Activated CD4-positive, alpha-beta T cell treated with anti-CD3 and anti-CD28 coated beads for 36 hours (primary cell): ENCODE measurements at regions of chr7 and their contacts with region 1.

Region 1: GRCh38 chr7:96596120-96596826 is 113.4 kb downstream of the SEM1 start:
- DNase-seq: no peak
- ATAC-seq: no peak
- H3K4me3 Mint-ChIP-seq: no peak overlapping the region
- H3K27ac Mint-ChIP-seq: no peak overlapping the region
- H3K4me1 Mint-ChIP-seq: no peaks in the 10 kb centered on the region
- H3K27me3 Mint-ChIP-seq: peaks cover 13% of the 10 kb centered on the region

Region 2: DNA sequence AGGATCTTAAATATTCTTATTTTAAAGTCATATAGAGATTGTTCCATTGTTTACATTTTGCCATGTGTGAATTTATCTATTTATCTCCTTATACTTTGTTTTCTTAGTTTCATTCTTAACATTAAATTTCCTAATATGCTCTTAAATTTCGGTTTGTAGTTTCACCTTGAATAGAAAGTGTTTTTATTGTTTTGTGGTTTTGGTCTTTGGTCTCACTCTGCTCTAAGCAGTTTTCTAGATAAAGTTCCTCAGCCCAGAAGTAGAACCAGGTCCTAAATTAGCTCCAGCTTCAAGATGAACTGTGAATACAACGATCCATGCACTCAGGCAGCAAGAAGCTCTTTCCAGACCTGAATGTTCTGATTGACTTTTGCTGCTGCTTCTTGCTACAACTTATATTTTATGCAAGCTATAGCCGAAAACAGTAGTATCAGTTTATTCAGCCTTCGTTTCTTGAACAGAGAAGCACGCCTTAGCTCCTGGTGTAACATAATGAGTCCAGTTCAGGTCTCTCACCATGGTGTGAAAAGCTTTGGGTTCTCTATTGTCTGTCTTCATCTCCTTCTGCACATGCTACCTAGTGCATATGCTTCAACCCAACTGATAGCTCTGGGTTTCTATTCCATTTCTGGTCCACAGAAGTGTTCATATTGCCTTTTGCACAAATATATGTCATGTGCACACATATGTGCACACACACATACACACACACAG is 18.0 kb after region 1 on chr7:
- CTCF ChIA-PET with region 1: interaction called, 4 read pairs
- POLR2A ChIA-PET with region 1: interaction called, 11 read pairs
- intact Hi-C with region 1: no loop called
- DNase-seq: no peak
- ATAC-seq: no peak
- H3K4me3 Mint-ChIP-seq: no peak overlapping the region
- H3K27ac Mint-ChIP-seq: no peak overlapping the region
- H3K4me1 Mint-ChIP-seq: no peaks in the 10 kb centered on the region
- H3K27me3 Mint-ChIP-seq: peaks cover 2% of the 10 kb centered on the region

Region 3: GRCh38 chr7:96679886-96680285 is 83.6 kb after region 1 on chr7:
- CTCF ChIA-PET with region 1: no interaction called
- POLR2A ChIA-PET with region 1: no interaction called
- intact Hi-C with region 1: no loop called
- DNase-seq: no peak
- ATAC-seq: peak; percentile 60
- H3K4me3 Mint-ChIP-seq: no peak overlapping the region
- H3K27ac Mint-ChIP-seq: no peak overlapping the region
- H3K4me1 Mint-ChIP-seq: peaks cover 4% of the 10 kb centered on the region
- H3K27me3 Mint-ChIP-seq: no peaks in the 10 kb centered on the region

Region 4: DNA sequence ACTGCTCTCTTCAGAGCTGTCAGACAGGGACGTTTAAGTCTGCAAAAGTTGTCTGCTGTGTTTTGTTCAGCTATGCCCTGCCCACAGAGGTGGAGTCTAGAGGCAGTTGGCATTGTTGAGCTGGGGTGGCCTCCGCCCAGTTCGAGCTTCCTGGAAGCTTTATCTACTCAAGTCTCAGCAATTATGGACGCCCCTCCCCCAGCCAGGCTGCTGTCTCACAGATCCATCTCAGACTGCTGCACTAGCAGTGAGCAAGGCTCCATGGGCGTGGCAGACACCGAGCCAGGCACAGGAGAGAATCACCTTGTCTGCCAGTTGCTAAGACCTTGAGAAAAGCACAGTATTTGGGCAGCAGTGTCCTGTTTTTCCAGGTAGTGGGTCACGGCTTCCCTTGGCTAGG is 619.3 kb after region 1 on chr7:
- CTCF ChIA-PET with region 1: no interaction called
- POLR2A ChIA-PET with region 1: no interaction called
- intact Hi-C with region 1: no loop called
- DNase-seq: no peak
- ATAC-seq: no peak
- H3K4me3 Mint-ChIP-seq: no peak overlapping the region
- H3K27ac Mint-ChIP-seq: no peak overlapping the region
- H3K4me1 Mint-ChIP-seq: no peaks in the 10 kb centered on the region
- H3K27me3 Mint-ChIP-seq: peaks cover 19% of the 10 kb centered on the region